ENCODE measurements at regions of chr3 and their contacts with region 1.

Region 1: GRCh38 chr3:141738022-141738890 is at the start of gene RNF7:
- DNase-seq: peak; percentile 85 to 98
- H3K4me3 ChIP-seq: peak within 1 kb of the TSS; percentile 94
- H3K27ac ChIP-seq: peak within 1 kb of the TSS; percentile 84
- H3K4me1 ChIP-seq: peaks cover 20% of the 10 kb centered on the region
- H3K27me3 ChIP-seq: no peaks in the 10 kb centered on the region
- CTCF ChIP-seq: peak; percentile 82
- total RNA-seq, gene RNF7: 82.2 and 89.1 TPM in 2 replicates

Region 2: GRCh38 chr3:141311496-141312353 is 426.5 kb before region 1 on chr3:
- CTCF ChIA-PET with region 1: no interaction called
- POLR2A ChIA-PET with region 1: no interaction called
- intact Hi-C with region 1: loop called (anchors 10 kb)
- DNase-seq: peak; percentile 89 to 99
- H3K4me3 ChIP-seq: peak overlapping the region; percentile 79
- H3K27ac ChIP-seq: no peak overlapping the region
- H3K4me1 ChIP-seq: peaks cover 7% of the 10 kb centered on the region
- H3K27me3 ChIP-seq: no peaks in the 10 kb centered on the region
- CTCF ChIP-seq: peak; percentile 73

Region 3: GRCh38 chr3:141575879-141576743 is 162.1 kb before region 1 on chr3:
- CTCF ChIA-PET with region 1: no interaction called
- POLR2A ChIA-PET with region 1: no interaction called
- intact Hi-C with region 1: loop called (anchors 2 kb)
- DNase-seq: no peak
- H3K4me3 ChIP-seq: no peak overlapping the region
- H3K27ac ChIP-seq: no peak overlapping the region
- H3K4me1 ChIP-seq: no peaks in the 10 kb centered on the region
- H3K27me3 ChIP-seq: no peaks in the 10 kb centered on the region
- CTCF ChIP-seq: peak; percentile 58

Region 4: DNA sequence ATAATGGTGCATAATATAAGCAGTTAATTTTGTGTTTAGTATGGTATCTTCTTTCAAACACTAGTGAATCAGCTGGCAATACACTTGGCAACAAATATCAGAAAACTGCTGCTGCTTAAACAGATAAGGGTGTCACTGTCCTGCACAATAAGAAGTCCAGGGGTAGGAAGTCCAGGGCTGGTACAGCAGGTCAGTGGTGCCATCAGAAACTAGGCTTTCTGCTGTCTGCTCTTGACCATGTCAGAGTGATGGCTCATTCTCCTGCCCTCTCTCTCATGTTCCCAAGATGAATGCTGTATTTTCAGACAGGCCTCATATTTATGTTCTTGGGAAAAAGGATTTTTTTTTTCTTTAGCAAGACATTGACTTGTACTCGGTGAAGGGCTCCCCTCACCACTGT is 15.8 kb after region 1 on chr3:
- CTCF ChIA-PET with region 1: no interaction called
- POLR2A ChIA-PET with region 1: no interaction called
- intact Hi-C with region 1: no loop called
- DNase-seq: no peak
- H3K4me3 ChIP-seq: no peak overlapping the region
- H3K27ac ChIP-seq: no peak overlapping the region
- H3K4me1 ChIP-seq: no peaks in the 10 kb centered on the region
- H3K27me3 ChIP-seq: no peaks in the 10 kb centered on the region
- CTCF ChIP-seq: no peak

Region 5: GRCh38 chr3:141840737-141841544 is 102.7 kb after region 1 on chr3:
- CTCF ChIA-PET with region 1: interaction called, 7 read pairs
- POLR2A ChIA-PET with region 1: no interaction called
- intact Hi-C with region 1: loop called (anchors 1 kb)
- DNase-seq: peak; percentile 42 to 73
- H3K4me3 ChIP-seq: no peak overlapping the region
- H3K27ac ChIP-seq: peak overlapping the region; percentile 10; the same call in 1 of the 2 replicates
- H3K4me1 ChIP-seq: peaks cover 15% of the 10 kb centered on the region
- H3K27me3 ChIP-seq: no peaks in the 10 kb centered on the region
- CTCF ChIP-seq: no peak

Region 6: DNA sequence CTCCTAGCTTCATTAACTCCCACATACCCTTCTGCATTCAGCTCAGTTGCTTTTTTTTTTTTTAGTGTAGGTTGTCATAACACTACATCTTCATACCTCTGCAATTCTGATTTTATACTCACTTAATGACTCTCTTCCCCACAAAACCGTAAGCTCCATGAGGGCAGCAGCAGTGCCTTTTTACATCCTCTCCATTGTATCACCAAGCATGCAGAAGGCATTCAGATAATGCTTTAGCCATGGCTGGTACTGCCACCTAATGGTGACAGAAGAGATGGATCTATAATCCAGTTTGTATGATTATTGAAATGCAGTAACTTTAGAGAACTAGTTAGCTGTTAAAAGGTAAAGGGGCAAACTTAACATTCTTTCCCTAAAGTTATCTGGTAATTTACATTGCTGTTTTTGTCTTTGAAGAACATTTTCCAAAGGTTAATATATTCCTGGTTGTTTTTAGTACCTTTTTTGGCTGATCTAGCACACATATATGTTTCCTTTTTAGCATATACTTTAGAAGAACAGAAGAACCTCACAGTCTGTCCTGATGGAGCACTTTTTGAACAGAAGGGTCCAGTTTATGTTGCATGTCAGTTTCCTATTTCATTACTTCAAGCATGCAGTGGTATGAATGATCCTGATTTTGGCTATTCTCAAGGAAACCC is 175.0 kb after region 1 on chr3:
- CTCF ChIA-PET with region 1: interaction called, 12 read pairs
- POLR2A ChIA-PET with region 1: no interaction called
- intact Hi-C with region 1: loop called (anchors 1 kb)
- DNase-seq: peak; percentile 40 to 48
- H3K4me3 ChIP-seq: no peak overlapping the region
- H3K27ac ChIP-seq: no peak overlapping the region
- H3K4me1 ChIP-seq: no peaks in the 10 kb centered on the region
- H3K27me3 ChIP-seq: no peaks in the 10 kb centered on the region
- CTCF ChIP-seq: peak; percentile 81

Region 7: DNA sequence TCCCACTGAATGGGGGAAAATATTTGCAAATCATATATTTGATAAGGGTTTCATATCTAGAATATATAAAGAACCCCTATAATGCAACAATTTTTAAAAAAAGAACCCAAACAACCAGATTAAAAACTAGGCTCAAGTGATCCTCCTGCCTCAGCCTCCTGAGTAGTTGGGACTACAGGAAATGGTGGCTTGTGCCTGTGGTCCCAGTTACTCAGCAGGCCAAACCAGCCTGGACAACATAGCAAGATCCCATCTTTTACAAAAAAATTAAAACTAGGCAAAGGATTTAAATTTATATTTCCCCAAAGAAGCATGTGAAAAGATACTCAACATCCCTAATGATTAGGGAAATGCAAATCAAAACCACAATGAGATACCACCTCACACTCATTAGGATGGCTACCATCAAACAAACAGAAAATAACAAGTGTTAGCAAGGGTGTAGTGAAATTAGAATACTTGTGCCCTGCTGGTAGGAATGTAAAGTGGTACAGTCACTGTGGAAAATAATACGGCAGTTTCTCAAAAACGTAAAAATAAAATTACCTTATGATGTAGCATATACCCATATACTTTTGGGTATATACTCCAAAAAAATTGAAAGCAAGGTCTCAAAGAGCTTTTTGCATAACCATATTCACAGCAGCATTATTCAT is 391.4 kb after region 1 on chr3:
- CTCF ChIA-PET with region 1: no interaction called
- POLR2A ChIA-PET with region 1: no interaction called
- intact Hi-C with region 1: loop called (anchors 10 kb)
- DNase-seq: no peak
- H3K4me3 ChIP-seq: no peak overlapping the region
- H3K27ac ChIP-seq: no peak overlapping the region
- H3K4me1 ChIP-seq: no peaks in the 10 kb centered on the region
- H3K27me3 ChIP-seq: no peaks in the 10 kb centered on the region
- CTCF ChIP-seq: 0 out of 2 replicates have a peak, but pooled peaks have one; percentile 38

Region 8: GRCh38 chr3:142279965-142280590 is 541.8 kb after region 1 on chr3:
- CTCF ChIA-PET with region 1: no interaction called
- POLR2A ChIA-PET with region 1: no interaction called
- intact Hi-C with region 1: loop called (anchors 1 kb)
- DNase-seq: peak; percentile 40 to 64
- H3K4me3 ChIP-seq: no peak overlapping the region
- H3K27ac ChIP-seq: no peak overlapping the region
- H3K4me1 ChIP-seq: peaks cover 20% of the 10 kb centered on the region
- H3K27me3 ChIP-seq: no peaks in the 10 kb centered on the region
- CTCF ChIP-seq: peak; percentile 83

Measured in PC-9 (cell line).